ENCODE measurements at regions of chr11 and their contacts with region 1.

Region 1: DNA sequence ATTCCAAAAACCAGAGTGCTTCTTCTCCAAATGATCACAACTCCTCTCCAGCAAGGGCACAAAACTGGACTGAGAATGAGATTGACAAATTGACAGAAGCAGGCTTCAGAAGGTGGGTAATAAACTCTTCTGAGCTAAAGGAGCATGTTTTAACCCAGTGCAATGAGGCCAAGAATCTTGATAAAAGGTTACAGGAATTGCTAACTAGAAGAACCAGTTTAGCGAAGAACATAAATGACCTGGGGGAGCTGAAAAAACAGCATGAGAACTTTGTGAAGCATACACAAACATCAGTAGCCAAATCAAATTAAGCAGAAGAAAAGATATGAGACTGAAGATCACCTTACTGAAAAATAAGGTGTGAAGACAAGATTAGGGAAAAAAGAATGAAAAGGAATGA is 15.5 kb downstream of the OR52M1 start:
- DNase-seq: peak in 1 of 2 experiments; percentile 70
- H3K4me3 ChIP-seq: no peak overlapping the region; the same call in 1 of the 2 replicates
- H3K27ac ChIP-seq: peak overlapping the region; percentile 16; the same call in 1 of the 2 replicates
- H3K4me1 ChIP-seq: peaks cover 22% of the 10 kb centered on the region
- H3K27me3 ChIP-seq: no peaks in the 10 kb centered on the region; the same call in 1 of the 2 replicates
- CTCF ChIP-seq: no peak

Region 2: GRCh38 chr11:4134844-4135243 is 425.6 kb before region 1 on chr11:
- CTCF ChIA-PET with region 1: no interaction called
- POLR2A ChIA-PET with region 1: interaction called, 12 read pairs
- intact Hi-C with region 1: no loop called
- DNase-seq: peak in 1 of 2 experiments; percentile 77
- H3K4me3 ChIP-seq: no peak overlapping the region
- H3K27ac ChIP-seq: peak overlapping the region; percentile 67
- H3K4me1 ChIP-seq: peaks cover 16% of the 10 kb centered on the region
- H3K27me3 ChIP-seq: no peaks in the 10 kb centered on the region
- CTCF ChIP-seq: no peak

Region 3: DNA sequence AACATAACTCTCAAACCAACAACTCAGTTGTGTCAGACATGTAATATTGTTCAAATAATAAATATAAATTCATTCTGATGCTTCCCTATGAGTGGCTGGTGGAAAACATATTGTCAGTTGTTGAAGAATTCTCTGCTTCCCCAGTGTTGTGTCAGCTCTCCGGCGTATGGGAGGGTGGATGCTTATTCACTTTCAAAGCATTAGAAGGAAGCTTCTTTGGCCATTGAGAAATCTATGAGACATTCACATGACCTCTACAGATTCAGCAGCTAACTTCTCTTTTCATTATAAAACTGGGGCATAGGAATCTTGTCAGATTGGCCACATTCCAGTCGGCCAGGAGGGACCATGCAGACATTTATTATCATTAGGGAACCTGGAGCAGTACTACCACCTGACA is 637.1 kb after region 1 on chr11:
- CTCF ChIA-PET with region 1: no interaction called
- POLR2A ChIA-PET with region 1: no interaction called
- intact Hi-C with region 1: no loop called
- DNase-seq: no peak
- H3K4me3 ChIP-seq: no peak overlapping the region
- H3K27ac ChIP-seq: no peak overlapping the region
- H3K4me1 ChIP-seq: no peaks in the 10 kb centered on the region
- H3K27me3 ChIP-seq: no peaks in the 10 kb centered on the region
- CTCF ChIP-seq: no peak